Dorsolateral prefrontal cortex (tissue), 120 donors: ENCODE measurements at regions of chr9 and their contacts with region 1.

Region 1: DNA sequence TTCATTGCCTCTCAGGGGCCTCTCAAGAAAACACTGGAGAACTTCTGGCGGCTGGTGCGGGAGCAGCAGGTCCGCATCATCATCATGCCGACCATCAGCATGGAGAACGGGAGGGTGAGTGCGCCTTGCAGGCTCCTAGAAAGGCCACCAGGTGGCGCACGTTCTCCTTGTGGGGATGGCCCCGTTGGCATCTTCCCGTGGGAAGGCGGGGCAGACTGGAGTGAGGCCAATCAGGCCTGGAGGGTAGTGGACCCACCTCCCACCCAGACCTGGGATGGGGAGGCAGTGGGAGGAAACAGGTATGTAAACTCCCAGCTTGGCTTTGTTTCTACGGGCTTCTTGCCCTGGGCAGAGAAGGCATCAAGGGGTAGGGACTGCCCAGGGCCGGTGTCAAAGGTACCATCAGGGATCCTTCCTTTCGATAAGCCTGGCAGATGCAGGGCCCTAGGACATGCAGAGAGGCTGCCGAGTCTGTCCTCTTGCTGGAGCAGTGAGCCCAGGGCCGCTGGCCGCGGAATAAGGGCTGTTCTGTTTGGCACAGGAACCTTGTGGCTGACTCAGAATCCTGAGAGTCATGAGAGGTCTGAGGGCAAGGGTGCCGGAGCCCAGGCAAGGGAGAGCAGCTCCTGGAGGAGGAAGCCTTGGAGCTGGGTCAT is 18.9 kb upstream of the SPTLC1 start:
- DNase-seq: peak; percentile 73 to 92 (median 82)
- H3K4me3 ChIP-seq: peak overlapping the region in 49 of 59 donors; percentile 2 to 59 (median 31)
- H3K27ac ChIP-seq: peak overlapping the region in 2 of 59 donors; percentile 40 to 60
- H3K27me3 ChIP-seq: no peaks in the 10 kb centered on the region
- CTCF ChIP-seq: peak; percentile 60 to 98 (median 93)

Region 2: GRCh38 chr9:92293452-92294296 is 159.6 kb after region 1 on chr9 and contains the start of gene IARS1:
- intact Hi-C with region 1: loop called in 1 of 2 experiments (anchors 10 kb)
- DNase-seq: peak; percentile 96 to 100 (median 99)
- H3K4me3 ChIP-seq: peak within 1 kb of the TSS; percentile 58 to 99 (median 85)
- H3K27ac ChIP-seq: peak within 1 kb of the TSS in 51 of 59 donors; percentile 26 to 83 (median 63)
- H3K27me3 ChIP-seq: no peaks in the 10 kb centered on the region
- CTCF ChIP-seq: peak in 55 of 56 donors; percentile 14 to 84 (median 66)
- total RNA-seq, gene IARS1: 50.3 to 131 (median 98.3) TPM

Region 3: DNA sequence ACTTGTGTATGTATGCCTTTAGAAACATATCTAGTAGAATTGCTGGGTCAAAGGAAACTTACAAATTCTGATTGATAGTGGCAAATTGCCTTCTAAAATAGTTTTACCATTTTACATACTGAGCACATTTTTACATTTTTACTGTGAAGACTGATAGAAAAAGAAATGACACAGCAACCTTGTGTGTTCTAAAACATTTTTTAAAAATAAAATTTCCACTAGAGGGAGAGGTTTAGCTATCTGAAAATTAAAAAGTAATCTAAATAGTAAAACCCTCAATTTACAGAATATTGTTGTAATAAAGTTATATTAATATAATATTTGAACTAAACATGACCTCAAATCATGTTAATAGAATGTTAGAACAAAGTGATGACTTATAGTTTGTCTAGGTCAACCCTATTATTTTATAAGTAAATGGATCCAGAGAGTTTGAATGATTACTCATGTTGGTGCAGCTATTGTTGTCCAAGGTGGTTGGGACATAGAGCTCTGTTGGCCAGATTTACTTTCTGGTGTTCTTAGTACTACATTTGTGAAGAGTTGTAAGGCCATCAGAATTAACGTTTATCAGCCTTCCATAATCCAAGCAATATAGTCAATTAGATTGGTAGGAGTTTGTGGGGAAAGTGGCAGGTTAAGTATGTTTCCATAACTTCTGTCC is 208.9 kb after region 1 on chr9:
- intact Hi-C with region 1: no loop called
- DNase-seq: no peak
- H3K4me3 ChIP-seq: no peak overlapping the region
- H3K27ac ChIP-seq: peak overlapping the region in 5 of 59 donors; percentile 30 to 66 (median 64)
- H3K27me3 ChIP-seq: no peaks in the 10 kb centered on the region
- CTCF ChIP-seq: peak in 49 of 56 donors; percentile 16 to 66 (median 38)

Region 4: GRCh38 chr9:92438900-92439526 is 304.9 kb after region 1 on chr9:
- intact Hi-C with region 1: loop called in 1 of 2 experiments (anchors 10 kb)
- DNase-seq: no peak
- H3K4me3 ChIP-seq: no peak overlapping the region
- H3K27ac ChIP-seq: no peak overlapping the region
- H3K27me3 ChIP-seq: no peaks in the 10 kb centered on the region
- CTCF ChIP-seq: peak in 53 of 56 donors; percentile 21 to 67 (median 44)

Region 5: GRCh38 chr9:92634712-92635605 is 500.9 kb after region 1 on chr9:
- intact Hi-C with region 1: loop called (anchors 2 to 5 kb)
- DNase-seq: peak; percentile 60 to 84 (median 72)
- H3K4me3 ChIP-seq: no peak overlapping the region
- H3K27ac ChIP-seq: peak overlapping the region in 22 of 59 donors; percentile 1 to 63 (median 40)
- H3K27me3 ChIP-seq: no peaks in the 10 kb centered on the region
- CTCF ChIP-seq: peak; percentile 71 to 98 (median 92)

Region 6: DNA sequence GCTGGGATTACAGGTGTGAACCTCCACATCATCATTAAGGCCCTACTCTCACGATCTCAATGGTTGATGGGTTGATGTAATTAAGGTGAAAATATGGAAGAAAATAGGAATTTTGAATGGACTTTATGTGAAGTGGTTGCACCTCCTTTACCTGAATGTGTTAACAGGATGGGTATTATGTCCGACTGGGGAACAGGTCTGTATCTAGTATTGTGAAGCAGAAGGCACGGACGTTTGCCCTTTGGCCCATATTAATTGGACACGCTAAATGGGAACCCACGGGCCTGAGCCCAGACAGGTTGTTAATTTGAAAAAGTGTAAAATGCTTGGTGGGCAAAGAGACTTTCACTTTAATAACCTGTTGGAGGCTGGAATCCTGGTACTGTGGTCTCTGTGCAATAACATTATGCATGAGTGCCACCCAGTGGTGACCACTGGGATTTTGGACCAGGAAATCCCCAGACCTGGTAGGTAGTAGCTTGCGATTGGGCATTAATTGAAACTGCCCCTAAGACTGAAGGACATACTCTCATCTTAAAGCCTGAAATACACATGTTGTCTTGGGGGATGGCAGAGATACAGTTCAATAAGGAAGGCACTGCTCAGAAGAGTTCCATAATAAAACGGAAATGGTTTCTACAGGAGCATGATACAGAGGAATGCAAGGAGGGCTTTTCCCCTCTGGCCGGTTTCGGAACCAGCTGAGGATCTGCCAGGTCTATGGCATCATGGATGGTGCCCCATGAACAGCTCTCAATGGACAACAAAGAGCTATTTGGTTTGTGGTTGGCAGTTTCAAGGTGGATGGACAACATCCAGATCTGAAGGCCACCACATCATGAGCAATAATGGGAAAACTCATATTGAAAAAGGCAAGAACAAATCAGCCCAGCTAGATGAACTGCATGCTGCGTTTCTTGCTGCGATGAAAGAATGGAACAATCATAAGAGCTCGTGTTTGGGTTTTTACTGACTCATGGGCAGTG is 656.8 kb after region 1 on chr9:
- intact Hi-C with region 1: loop called (anchors 5 to 10 kb)
- DNase-seq: peak; percentile 70 to 90 (median 80)
- H3K4me3 ChIP-seq: peak overlapping the region in 30 of 59 donors; percentile 4 to 53 (median 30)
- H3K27ac ChIP-seq: no peak overlapping the region
- H3K27me3 ChIP-seq: peaks cover 0 to 4% (median 0%) of the 10 kb centered on the region in 45 donors
- CTCF ChIP-seq: peak; percentile 73 to 98 (median 88)